Activated CD8-positive, alpha-beta T cell treated with anti-CD3 and anti-CD28 coated beads for 36 hours (primary cell): ENCODE measurements at regions of chr20 and their contacts with region 1.

Region 1: DNA sequence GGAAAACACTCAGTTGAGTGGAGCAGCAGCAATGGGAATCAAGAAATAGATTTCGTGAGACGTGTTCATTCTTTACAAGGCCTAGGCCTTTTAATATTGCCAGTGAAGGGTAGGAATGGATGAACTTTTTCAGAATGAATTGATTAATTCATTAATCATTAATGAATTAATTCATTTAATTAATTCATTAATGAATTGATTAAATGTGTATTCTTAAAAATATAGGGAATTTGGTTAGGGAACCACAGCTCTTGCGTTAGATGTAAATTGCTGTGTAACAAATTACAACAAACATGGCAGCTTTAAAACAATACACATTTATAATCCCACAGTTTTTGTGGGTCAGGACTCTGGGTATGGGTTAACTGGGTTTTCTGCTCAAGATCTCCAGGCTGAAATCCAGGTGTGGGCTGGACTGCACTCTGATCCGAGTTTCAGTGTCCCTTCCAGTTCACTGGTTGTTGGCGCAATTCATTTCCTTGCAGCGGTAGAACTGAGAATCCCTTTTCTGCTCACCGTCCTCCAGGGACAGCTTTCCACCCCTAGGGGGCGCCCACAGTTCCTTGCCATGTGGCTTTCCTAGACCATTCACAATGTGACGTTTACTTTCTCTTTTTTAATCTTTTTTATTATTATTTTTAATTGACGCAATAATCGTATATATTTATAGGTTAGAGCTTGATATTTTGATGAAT is 32.8 kb upstream of the BCAS1 start:
- DNase-seq: peak; percentile 86
- ATAC-seq: peak; percentile 73
- H3K4me3 Mint-ChIP-seq: no peak overlapping the region
- H3K27ac Mint-ChIP-seq: no peak overlapping the region
- H3K4me1 Mint-ChIP-seq: no peaks in the 10 kb centered on the region
- H3K27me3 Mint-ChIP-seq: no peaks in the 10 kb centered on the region
- CTCF ChIP-seq: peak; percentile 93

Region 2: DNA sequence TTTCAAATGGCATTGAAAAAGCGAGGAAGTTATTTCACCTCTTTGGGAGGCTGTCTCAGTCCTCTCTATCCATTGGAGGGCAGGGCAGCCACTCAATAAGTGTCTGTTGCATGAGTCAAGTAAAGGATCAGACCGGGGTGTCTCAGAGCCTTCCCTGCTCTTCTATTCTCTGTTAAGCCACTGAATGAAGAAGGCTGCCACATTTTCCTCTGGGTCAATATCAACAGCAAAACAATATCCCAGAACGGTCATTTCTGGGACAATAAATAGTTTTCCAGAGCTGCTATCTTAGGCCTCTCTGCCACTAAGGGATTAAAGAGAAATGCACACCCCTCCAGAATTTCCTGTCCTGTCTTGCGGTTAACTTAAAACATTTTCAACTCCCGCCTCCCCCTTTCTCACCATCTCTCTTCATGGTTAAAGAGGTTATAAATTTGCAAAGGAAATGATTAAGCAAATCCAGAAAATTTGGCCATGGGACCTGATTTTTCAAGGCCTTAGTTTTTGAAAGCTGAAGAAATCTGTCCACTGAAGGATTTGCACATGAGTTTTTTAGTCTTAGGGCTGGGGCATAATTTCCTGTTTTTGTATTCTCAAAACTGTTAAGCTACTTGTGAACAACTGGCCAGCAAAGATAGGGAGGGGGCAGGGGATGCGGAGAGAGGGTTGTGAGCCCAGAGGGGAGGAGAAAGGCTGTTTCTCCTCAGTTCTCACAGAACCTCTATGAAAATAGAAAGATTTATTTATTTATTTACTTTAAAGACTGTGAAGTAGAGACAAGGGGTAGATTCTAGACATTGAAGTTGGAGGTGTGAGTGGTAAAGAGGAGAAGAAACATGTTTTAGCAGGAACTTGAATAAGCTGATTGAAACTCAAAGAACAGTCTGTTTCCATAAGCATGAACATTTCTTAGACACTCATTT is 168.5 kb before region 1 on chr20:
- CTCF ChIA-PET with region 1: no interaction called
- POLR2A ChIA-PET with region 1: no interaction called
- intact Hi-C with region 1: no loop called
- DNase-seq: peak; percentile 63
- ATAC-seq: peak; percentile 85
- H3K4me3 Mint-ChIP-seq: peak overlapping the region; percentile 26
- H3K27ac Mint-ChIP-seq: peak overlapping the region; percentile 86
- H3K4me1 Mint-ChIP-seq: peaks cover 60% of the 10 kb centered on the region
- H3K27me3 Mint-ChIP-seq: no peaks in the 10 kb centered on the region
- CTCF ChIP-seq: no peak

Region 3: DNA sequence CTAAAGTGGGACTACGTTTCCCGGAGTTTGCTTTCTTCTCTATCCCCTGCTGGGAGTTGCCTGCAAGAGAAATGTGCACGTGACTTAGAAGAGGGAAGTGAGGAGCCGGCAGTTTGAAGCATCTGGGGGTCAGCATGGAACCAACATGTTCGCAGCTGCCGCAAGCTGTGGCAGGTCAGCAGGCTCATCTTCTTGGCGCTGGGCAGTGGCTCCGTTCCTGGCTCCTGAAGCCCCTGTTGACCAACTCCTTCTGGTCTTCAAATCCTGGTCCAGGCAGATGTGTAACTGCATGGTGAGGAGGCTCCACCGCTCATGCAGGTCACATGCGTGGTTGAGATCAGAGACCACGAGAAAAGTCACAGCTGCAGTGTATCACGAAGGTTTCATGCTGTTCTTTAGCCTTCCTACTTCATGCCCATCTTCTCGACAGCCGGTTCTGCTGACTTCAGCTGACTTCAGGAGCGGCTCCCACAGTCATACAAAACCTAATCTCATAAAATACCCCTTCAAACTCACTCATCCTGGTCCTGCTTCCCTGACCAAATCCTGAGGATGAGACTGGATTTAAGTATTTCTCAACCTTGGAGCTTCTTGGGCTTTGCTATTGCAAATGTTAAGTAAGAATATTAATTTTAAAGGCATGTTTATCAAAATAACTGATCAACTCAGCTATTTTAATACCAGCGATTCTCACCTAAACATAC is 12.1 kb after region 1 on chr20:
- CTCF ChIA-PET with region 1: interaction called, 11 read pairs
- POLR2A ChIA-PET with region 1: no interaction called
- intact Hi-C with region 1: no loop called
- DNase-seq: no peak
- ATAC-seq: no peak
- H3K4me3 Mint-ChIP-seq: no peak overlapping the region
- H3K27ac Mint-ChIP-seq: no peak overlapping the region
- H3K4me1 Mint-ChIP-seq: no peaks in the 10 kb centered on the region
- H3K27me3 Mint-ChIP-seq: peaks cover 8% of the 10 kb centered on the region
- CTCF ChIP-seq: no peak

Region 4: GRCh38 chr20:54167909-54168872 is 65.0 kb after region 1 on chr20:
- CTCF ChIA-PET with region 1: interaction called, 13 read pairs
- POLR2A ChIA-PET with region 1: no interaction called
- intact Hi-C with region 1: no loop called
- DNase-seq: no peak
- ATAC-seq: no peak
- H3K4me3 Mint-ChIP-seq: no peak overlapping the region
- H3K27ac Mint-ChIP-seq: no peak overlapping the region
- H3K4me1 Mint-ChIP-seq: no peaks in the 10 kb centered on the region
- H3K27me3 Mint-ChIP-seq: peaks cover 47% of the 10 kb centered on the region
- CTCF ChIP-seq: no peak

Region 5: GRCh38 chr20:54207743-54208547 is 104.7 kb after region 1 on chr20 and contains the start of gene PFDN4:
- CTCF ChIA-PET with region 1: interaction called, 31 read pairs
- POLR2A ChIA-PET with region 1: interaction called, 3 read pairs
- intact Hi-C with region 1: no loop called
- DNase-seq: peak; percentile 84
- ATAC-seq: peak; percentile 91
- H3K4me3 Mint-ChIP-seq: peak within 1 kb of the TSS; percentile 83
- H3K27ac Mint-ChIP-seq: peak within 1 kb of the TSS; percentile 100
- H3K4me1 Mint-ChIP-seq: peaks cover 35% of the 10 kb centered on the region
- H3K27me3 Mint-ChIP-seq: no peaks in the 10 kb centered on the region
- CTCF ChIP-seq: peak; percentile 81
- total RNA-seq, gene PFDN4: 31.1 to 37.4 TPM